ENCODE measurements at regions of chr14 and their contacts with region 1.

Region 1: GRCh38 chr14:103104654-103105452 is 10.3 kb downstream of the EXOC3L4 start:
- DNase-seq: no peak
- H3K4me3 ChIP-seq: peak overlapping the region in 1 of 2 donors; percentile 20
- H3K27ac ChIP-seq: no peak overlapping the region
- H3K4me1 ChIP-seq: peaks cover 42% of the 10 kb centered on the region
- H3K27me3 ChIP-seq: peaks cover 25% of the 10 kb centered on the region
- CTCF ChIP-seq: peak; percentile 90 to 99 (median 97)
- POLR2A ChIP-seq: no peak

Region 2: DNA sequence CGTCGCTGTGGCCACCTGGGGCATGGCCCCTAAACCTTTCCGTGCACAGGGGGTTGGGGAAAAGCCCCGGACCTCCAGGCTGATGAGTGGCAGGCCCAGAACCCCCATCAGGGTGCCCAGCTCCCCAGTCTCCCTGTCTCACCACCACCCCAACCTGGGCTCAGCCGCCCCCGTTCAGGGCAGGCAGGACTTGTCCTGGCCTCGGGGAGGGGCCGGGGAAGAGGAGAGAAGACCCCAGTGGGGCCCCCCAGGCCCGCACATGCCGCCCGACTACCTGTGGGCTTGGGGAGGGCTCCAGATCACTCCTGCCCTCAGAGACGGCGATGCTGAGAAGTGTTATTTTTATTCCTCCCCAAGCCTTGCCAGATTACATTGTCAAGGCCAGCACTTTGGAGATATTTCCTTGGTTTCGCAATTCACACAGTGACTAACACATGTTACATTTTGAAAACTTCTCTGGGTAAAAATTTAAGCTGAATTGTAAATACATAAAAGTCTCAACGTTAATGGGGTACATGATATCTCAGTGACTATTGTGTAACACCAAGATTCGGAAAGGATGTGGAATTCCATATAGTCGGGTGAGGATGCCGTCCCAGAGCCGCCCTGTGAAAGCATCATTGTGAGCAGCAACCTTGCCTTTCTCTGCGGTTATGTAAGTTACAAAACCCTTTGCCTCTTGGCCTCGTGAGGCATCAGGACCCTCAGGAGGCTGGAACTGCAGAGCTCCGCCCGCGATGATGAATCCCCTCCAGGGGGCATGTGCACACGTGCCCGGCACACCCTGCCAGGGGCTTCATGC is 1629.2 kb before region 1 on chr14:
- intact Hi-C with region 1: no loop called
- DNase-seq: peak in 1 of 2 donors; percentile 89
- H3K4me3 ChIP-seq: peak overlapping the region; percentile 6
- H3K27ac ChIP-seq: peak overlapping the region; percentile 91
- H3K4me1 ChIP-seq: peaks cover 50% of the 10 kb centered on the region
- H3K27me3 ChIP-seq: no peaks in the 10 kb centered on the region
- CTCF ChIP-seq: no peak
- POLR2A ChIP-seq: no peak

Region 3: DNA sequence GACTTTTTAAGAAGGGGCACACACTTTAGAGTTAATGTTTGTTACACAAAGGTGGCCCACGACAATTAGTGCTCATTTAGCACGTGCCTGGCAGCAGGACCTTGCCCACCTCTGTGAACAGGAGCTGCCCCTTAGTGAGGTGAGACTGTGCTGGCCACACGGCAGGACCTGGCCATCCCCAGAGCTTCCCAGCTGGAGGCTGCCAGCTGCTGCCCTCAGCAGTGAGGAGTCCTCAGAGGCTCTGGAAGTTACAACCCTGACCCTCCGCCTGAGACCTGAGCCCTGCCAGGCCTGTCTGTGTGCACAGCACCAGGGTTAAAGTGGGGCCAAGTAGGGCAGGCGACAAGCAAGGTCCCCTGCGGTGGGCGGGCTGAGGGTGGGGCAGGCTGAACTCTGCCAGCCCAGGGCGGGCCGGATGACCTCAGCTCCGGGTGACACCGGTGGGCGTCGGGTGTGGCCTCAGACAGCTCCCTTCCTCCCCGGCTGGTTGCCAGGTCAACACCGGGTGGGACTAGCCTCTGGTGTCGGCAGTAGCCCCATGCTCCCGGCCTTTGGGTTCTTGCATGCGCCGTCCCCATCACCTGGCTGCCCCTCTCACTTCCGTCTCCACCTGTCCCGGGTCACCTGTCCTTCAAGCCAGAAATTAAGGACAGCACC is 30.0 kb before region 1 on chr14:
- intact Hi-C with region 1: no loop called
- DNase-seq: no peak
- H3K4me3 ChIP-seq: peak overlapping the region; percentile 41 to 45
- H3K27ac ChIP-seq: peak overlapping the region; percentile 72
- H3K4me1 ChIP-seq: peaks cover 46% of the 10 kb centered on the region
- H3K27me3 ChIP-seq: no peaks in the 10 kb centered on the region
- CTCF ChIP-seq: no peak
- POLR2A ChIP-seq: no peak

Region 4: DNA sequence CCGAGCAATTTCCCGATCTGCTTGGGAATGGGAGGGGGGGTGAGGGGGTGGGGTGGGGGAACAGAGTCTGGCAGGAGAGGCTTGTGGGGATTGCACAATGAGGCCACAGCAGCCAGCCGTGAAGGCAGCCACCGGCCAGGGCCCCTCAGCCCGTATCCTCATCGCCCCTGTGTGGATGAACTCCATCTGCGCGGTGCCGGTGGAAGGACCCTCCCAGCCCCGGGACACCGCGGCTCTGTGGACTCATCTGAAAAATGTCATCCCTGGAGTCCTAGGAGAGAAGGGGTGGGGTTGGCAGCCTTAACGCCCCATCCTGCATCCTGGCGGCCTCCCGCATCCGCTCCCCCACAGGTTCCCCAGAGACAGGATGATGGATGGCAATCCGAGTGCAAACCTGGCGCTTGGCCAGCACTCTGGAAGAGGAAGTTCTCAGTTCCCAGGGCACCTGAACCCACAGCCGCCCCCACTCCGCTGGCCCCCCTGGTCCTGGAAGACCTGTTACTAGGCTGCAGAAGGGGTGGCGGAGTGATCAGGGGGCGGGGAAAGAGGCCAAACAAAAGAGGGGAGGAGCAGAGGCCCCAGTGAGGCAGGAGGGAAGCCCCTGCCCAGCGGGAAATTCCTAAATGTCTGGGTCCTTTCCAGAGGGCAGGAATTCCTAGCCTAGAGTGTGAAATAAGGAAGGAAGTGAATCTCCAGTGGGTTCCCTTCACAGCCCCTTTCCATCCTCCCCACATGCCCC is 17.2 kb after region 1 on chr14:
- intact Hi-C with region 1: no loop called
- DNase-seq: peak in 1 of 2 donors; percentile 97
- H3K4me3 ChIP-seq: peak overlapping the region; percentile 53 to 59
- H3K27ac ChIP-seq: peak overlapping the region; percentile 93
- H3K4me1 ChIP-seq: peaks cover 73% of the 10 kb centered on the region
- H3K27me3 ChIP-seq: no peaks in the 10 kb centered on the region
- CTCF ChIP-seq: no peak
- POLR2A ChIP-seq: no peak

Region 5: DNA sequence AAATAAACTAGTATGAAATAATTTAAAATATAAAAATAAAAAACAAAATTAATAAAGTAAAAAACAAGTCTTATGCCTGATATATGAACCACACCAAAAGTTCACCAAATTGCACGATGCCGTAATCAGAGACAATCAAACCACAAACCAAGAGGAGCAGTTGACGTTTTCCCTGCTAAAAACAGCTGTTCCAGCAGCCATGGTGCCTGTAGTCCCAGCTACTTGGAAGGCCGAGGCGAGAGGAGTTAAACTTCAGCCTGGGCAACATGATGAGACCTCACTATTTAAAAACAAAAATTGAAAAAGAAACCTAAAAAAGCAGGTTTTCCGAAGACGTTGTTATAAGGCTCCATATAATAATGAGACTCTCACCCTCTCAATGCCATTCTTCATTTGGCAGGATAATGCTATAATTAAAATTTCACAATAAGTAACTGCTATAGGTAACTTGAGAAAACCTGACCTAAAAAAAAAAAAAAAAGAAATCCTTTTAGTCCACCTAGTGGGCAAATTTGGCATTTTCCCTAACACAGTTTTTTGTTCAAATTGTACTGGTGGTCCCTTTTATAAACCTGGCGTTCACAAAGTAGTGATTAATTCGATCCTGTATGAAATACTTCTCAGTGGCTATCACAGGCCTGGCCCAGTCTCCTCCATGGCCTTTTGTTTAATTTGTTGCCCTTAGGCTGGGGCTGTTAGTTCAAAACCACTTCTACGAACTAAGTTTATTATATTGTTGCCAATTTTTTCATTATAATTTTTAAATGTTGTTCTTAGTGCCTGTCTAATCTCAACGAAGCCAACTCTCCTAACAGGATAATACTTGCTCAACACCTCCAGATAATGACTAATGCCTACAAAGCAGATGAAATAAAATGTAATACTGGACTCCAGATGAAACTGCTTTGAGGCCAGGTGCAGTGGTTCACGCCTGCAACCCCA is 80.5 kb after region 1 on chr14:
- intact Hi-C with region 1: loop called (anchors 5 kb)
- DNase-seq: no peak
- H3K4me3 ChIP-seq: no peak overlapping the region
- H3K27ac ChIP-seq: peak overlapping the region; percentile 56
- H3K4me1 ChIP-seq: peaks cover 12% of the 10 kb centered on the region
- H3K27me3 ChIP-seq: no peaks in the 10 kb centered on the region
- CTCF ChIP-seq: peak in 2 of 3 experiments; percentile 44 to 63
- POLR2A ChIP-seq: no peak